Activated CD4-positive, alpha-beta T cell treated with anti-CD3 and anti-CD28 coated beads for 36 hours (primary cell): ENCODE measurements at regions of chr11 and their contacts with region 1.

Region 1: DNA sequence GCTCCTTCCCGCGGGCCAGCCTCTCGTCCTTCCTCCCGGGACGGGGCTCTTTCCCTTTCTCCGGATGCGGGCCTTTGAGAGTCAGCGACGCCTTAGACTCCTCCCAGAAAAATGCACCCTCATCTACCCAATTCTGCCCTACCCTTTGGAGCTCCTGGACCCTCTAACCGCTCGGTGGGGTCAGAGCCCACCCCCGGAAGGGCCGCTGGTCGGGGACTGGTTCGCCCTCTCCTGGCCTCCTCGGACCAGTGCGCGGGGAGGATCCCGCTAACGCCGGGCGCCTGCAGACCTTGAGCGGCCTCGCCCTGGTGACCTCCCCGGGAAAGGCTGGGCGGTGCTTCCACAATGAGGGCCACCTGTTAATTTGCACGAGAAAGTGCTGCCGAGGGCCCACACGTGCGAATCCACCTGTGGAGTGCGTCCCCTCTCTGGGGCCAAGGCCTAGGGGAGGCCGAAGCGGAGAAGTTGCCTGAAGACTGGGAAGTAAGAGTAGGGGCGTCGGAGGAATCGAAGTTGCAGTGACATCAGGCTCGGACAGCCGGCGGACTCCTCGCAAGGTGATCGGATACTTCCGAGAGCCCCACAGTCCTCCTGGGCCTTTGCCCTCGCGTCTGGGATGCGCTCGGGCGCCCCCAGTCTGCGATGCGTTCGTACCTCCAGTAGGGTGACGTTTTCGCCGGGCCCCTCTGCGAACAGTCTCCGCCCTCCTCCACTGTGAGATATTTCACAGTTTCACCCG is 61.5 kb downstream of the ENDOD1 start:
- DNase-seq: peak; percentile 96
- ATAC-seq: peak; percentile 88
- H3K4me3 Mint-ChIP-seq: peak overlapping the region; percentile 83
- H3K27ac Mint-ChIP-seq: peak overlapping the region; percentile 87
- H3K4me1 Mint-ChIP-seq: peaks cover 36% of the 10 kb centered on the region
- H3K27me3 Mint-ChIP-seq: peaks cover 3% of the 10 kb centered on the region

Region 2: DNA sequence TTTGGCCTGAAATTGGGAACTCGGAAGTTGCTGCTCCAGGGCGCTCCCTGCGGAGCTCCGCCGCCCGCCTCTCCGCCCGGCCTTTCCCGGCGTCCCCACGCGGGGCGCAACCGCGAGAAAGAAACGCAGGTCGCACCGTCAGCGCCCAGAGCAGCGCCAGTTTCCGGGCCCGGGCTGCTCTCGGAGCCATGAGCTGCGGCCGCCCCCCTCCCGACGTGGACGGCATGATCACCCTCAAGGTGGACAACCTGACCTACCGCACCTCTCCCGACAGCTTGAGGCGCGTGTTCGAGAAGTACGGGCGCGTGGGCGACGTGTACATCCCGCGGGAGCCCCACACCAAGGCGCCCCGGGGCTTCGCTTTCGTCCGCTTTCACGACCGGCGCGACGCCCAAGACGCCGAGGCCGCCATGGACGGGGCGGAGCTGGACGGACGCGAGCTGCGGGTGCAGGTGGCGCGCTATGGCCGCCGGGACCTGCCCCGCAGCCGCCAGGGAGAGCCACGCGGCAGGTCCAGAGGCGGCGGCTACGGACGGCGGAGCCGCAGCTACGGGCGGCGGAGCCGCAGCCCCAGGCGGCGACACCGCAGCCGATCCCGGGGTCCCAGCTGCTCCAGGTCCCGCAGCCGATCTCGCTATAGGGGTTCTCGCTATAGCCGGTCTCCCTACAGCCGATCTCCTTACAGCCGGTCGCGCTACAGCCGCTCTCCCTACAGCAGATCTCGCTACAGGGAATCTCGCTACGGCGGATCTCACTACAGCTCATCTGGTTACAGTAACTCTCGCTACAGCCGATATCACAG is 83.9 kb before region 1 on chr11:
- CTCF ChIA-PET with region 1: interaction called, 52 read pairs
- POLR2A ChIA-PET with region 1: interaction called, 4 read pairs
- intact Hi-C with region 1: loop called (anchors 1 kb)
- DNase-seq: peak; percentile 87
- ATAC-seq: peak; percentile 68
- H3K4me3 Mint-ChIP-seq: peak overlapping the region; percentile 97
- H3K27ac Mint-ChIP-seq: peak overlapping the region; percentile 92
- H3K4me1 Mint-ChIP-seq: peaks cover 25% of the 10 kb centered on the region
- H3K27me3 Mint-ChIP-seq: peaks cover 2% of the 10 kb centered on the region

Region 3: DNA sequence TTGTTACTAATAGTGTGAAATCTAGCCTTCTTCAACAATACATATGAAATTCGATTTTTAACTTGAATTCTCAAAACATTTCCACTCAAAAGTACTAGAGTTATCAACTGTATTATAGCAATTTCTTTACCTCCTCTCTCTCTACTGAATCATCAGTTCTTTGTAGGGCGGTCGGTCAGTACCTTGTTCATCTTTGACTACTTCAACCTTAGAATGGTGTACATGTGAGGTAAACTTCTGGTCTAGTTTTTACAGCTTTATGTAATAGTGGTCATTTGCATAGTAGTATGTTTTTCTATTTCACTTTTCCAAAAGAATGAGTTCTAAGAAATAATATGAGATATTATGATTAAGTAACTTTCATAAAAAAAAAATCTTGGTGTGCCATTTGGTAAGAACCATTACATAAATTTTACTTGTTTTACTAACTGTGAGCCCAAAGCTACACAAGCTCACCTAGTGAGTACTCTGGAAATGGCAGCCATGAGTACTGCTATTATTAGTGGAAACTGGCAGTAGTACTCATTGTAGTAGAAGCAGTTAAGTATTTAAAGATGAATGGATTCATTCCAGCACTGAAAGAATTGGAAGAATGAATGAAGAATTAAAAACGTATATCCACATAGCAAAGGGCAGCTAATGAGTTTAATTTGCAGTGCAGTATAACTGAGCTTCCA is 49.8 kb after region 1 on chr11:
- CTCF ChIA-PET with region 1: interaction called, 10 read pairs
- POLR2A ChIA-PET with region 1: no interaction called
- intact Hi-C with region 1: no loop called
- DNase-seq: no peak
- ATAC-seq: peak; percentile 64
- H3K4me3 Mint-ChIP-seq: no peak overlapping the region
- H3K27ac Mint-ChIP-seq: no peak overlapping the region
- H3K4me1 Mint-ChIP-seq: peaks cover 46% of the 10 kb centered on the region
- H3K27me3 Mint-ChIP-seq: no peaks in the 10 kb centered on the region

Region 4: GRCh38 chr11:95337175-95337957 is 186.3 kb after region 1 on chr11:
- CTCF ChIA-PET with region 1: interaction called, 6 read pairs
- POLR2A ChIA-PET with region 1: no interaction called
- intact Hi-C with region 1: loop called in 1 of 2 experiments (anchors 2 kb)
- DNase-seq: peak; percentile 63
- ATAC-seq: peak; percentile 74
- H3K4me3 Mint-ChIP-seq: no peak overlapping the region
- H3K27ac Mint-ChIP-seq: no peak overlapping the region
- H3K4me1 Mint-ChIP-seq: peaks cover 1% of the 10 kb centered on the region
- H3K27me3 Mint-ChIP-seq: no peaks in the 10 kb centered on the region

Region 5: GRCh38 chr11:95556342-95557163 is 405.4 kb after region 1 on chr11:
- CTCF ChIA-PET with region 1: interaction called, 7 read pairs
- POLR2A ChIA-PET with region 1: interaction called, 4 read pairs
- intact Hi-C with region 1: loop called (anchors 1 to 5 kb)
- DNase-seq: peak; percentile 60
- ATAC-seq: peak; percentile 94
- H3K4me3 Mint-ChIP-seq: peak overlapping the region; percentile 17
- H3K27ac Mint-ChIP-seq: peak overlapping the region; percentile 90
- H3K4me1 Mint-ChIP-seq: peaks cover 23% of the 10 kb centered on the region
- H3K27me3 Mint-ChIP-seq: no peaks in the 10 kb centered on the region

Region 6: GRCh38 chr11:95764267-95764898 is 613.3 kb after region 1 on chr11:
- CTCF ChIA-PET with region 1: interaction called, 139 read pairs
- POLR2A ChIA-PET with region 1: interaction called, 6 read pairs
- intact Hi-C with region 1: loop called (anchors 1 kb)
- DNase-seq: no peak
- ATAC-seq: peak; percentile 65
- H3K4me3 Mint-ChIP-seq: no peak overlapping the region
- H3K27ac Mint-ChIP-seq: no peak overlapping the region
- H3K4me1 Mint-ChIP-seq: no peaks in the 10 kb centered on the region
- H3K27me3 Mint-ChIP-seq: no peaks in the 10 kb centered on the region

Region 7: GRCh38 chr11:96424693-96425092 is 1273.6 kb after region 1 on chr11:
- CTCF ChIA-PET with region 1: interaction called, 4 read pairs
- POLR2A ChIA-PET with region 1: no interaction called
- intact Hi-C with region 1: loop called (anchors 1 to 5 kb)
- DNase-seq: no peak
- ATAC-seq: peak; percentile 80
- H3K4me3 Mint-ChIP-seq: no peak overlapping the region
- H3K27ac Mint-ChIP-seq: no peak overlapping the region
- H3K4me1 Mint-ChIP-seq: peaks cover 14% of the 10 kb centered on the region
- H3K27me3 Mint-ChIP-seq: peaks cover 28% of the 10 kb centered on the region